Activated CD8-positive, alpha-beta T cell treated with anti-CD3 and anti-CD28 coated beads, Interleukin-2, amount 10 ng/mL, durations not matched to agents 7 days and 5 days (primary cell): ENCODE measurements at regions of chr1 and their contacts with region 1.

Region 1: DNA sequence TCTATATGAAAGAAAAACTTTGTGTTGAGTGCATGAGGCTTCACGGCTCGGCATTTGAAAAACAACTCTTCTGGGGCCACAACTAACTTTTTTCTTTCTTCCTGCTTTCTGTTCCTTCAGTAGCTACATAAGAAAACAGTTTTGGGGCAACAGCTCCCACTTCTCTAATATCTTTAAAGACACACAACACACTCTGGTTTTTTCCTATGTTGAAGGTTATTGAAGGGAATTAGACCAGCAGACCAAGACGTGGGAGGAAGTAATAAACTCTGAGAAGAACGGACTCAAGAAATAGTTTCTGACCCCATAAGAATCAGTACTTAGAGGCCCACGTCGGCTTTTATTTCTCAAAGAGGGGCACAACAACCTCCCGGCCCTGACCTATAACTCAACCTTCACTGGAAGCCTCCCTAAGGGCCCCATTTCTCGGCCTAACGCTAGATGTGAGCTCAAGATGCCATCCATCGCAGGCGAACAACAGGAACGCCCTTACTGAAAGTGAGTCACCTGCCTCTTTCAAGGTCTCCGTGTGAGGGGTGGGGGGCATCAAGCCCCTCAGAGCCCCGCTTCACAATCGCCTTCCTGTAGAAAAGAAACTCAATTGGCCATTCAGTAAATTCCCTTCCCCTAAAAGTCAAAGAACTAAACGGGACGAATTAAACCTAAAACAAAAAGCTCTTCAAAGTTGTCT is 844 bp downstream of the ZMYM6 start:
- DNase-seq: peak; percentile 53
- ATAC-seq: peak; percentile 39
- H3K4me3 Mint-ChIP-seq: peak overlapping the region; percentile 92
- H3K27ac Mint-ChIP-seq: peak overlapping the region; percentile 91
- H3K4me1 Mint-ChIP-seq: peaks cover 20% of the 10 kb centered on the region
- H3K27me3 Mint-ChIP-seq: peaks cover 3% of the 10 kb centered on the region

Region 2: GRCh38 chr1:34984793-34985608 is 45.9 kb before region 1 on chr1 and contains the start of gene TMEM35B:
- CTCF ChIA-PET with region 1: interaction called, 4 read pairs
- POLR2A ChIA-PET with region 1: interaction called, 23 read pairs
- DNase-seq: peak; percentile 86
- ATAC-seq: peak; percentile 98
- H3K4me3 Mint-ChIP-seq: peak within 1 kb of the TSS; percentile 98
- H3K27ac Mint-ChIP-seq: peak within 1 kb of the TSS; percentile 96
- H3K4me1 Mint-ChIP-seq: peaks cover 31% of the 10 kb centered on the region
- H3K27me3 Mint-ChIP-seq: no peaks in the 10 kb centered on the region
- total RNA-seq, gene TMEM35B: 24.8 to 26.7 TPM

Region 3: DNA sequence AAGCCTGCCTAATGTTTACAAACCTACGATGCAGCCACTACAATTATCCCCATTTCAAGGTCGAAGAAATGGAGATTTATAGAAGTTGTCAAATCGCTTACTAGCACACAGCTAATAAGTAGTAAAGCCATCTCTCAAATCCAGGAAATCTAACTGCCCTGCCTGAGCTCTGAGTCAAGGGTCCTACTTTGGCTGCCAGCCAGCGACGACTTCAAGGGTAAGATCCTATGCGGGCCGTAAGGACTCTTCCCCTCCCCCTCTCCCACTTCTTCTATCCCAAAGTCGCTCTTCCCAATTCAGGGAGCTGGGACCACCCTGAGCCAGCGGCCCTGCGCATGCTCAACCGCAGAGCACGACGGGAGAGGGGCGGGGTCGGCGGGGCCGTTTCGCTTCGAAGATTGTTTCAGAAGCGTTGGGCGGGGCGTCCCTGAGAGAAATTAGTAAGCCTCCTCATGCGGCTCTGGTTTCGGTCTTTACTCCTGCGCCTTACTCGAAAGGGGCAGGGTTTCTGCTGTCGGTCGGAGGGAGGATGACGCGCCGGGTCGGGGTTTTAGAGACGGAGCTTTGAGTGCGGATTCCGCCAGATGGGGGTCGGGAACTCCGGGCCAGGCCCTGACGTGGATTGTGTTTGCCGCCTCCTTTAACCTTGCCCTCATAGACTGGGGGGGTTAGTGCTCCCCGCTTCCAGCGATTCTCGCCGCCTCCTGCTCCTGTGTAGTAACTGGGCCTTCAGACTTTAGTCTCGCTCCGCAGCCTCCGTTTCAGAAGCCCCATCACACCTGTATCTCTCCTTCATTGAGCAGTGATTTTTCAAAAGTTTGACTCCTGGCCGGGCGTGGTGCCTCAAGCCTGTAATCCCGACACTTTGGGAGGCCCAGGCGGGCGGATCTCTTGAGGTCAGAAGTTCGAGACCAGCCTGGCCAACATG is 48.4 kb after region 1 on chr1 and contains the start of gene ZMYM1:
- CTCF ChIA-PET with region 1: interaction called, 4 read pairs
- POLR2A ChIA-PET with region 1: interaction called, 10 read pairs
- DNase-seq: peak; percentile 90
- ATAC-seq: peak; percentile 96
- H3K4me3 Mint-ChIP-seq: peak within 1 kb of the TSS; percentile 97
- H3K27ac Mint-ChIP-seq: peak within 1 kb of the TSS; percentile 99
- H3K4me1 Mint-ChIP-seq: peaks cover 34% of the 10 kb centered on the region
- H3K27me3 Mint-ChIP-seq: peaks cover 7% of the 10 kb centered on the region
- total RNA-seq, gene ZMYM1: 19.6 to 21.4 TPM